ENCODE measurements at regions of chr13 and their contacts with region 1.

Region 1: DNA sequence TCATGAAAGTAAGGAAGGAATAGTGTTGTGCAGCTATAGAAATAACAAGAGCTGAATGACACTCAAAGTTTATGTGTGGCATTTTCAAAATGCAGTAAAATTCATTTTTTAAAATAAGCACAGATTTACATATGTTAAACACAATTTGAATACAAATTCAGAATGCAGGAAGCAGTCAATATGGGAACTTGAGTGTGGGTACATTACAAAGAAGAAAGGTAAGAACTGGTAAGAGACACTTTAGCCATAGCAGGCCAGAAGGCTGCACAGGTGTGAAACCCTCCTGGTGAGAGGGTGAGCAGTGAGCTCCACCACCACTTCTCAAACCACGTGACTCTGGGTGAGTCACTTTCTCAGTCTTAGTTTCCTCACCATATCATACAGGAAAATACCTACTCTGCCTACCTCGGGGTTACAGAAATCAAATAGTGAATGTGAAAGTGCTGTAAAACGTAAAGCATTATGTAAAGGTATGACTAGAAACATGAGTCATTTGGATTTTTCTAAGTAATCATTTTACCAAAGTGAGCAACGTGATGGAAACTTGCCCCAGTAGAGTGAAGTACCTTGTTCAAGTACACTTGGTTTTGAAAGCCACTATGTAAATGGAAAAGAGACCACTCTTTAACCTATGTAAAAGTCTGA is 40.5 kb downstream of the USP12 start:
- DNase-seq: peak; percentile 86
- H3K4me3 Mint-ChIP-seq: peak overlapping the region; percentile 61
- H3K27ac Mint-ChIP-seq: peak overlapping the region; percentile 92
- H3K4me1 Mint-ChIP-seq: peaks cover 90% of the 10 kb centered on the region
- H3K27me3 Mint-ChIP-seq: no peaks in the 10 kb centered on the region

Region 2: DNA sequence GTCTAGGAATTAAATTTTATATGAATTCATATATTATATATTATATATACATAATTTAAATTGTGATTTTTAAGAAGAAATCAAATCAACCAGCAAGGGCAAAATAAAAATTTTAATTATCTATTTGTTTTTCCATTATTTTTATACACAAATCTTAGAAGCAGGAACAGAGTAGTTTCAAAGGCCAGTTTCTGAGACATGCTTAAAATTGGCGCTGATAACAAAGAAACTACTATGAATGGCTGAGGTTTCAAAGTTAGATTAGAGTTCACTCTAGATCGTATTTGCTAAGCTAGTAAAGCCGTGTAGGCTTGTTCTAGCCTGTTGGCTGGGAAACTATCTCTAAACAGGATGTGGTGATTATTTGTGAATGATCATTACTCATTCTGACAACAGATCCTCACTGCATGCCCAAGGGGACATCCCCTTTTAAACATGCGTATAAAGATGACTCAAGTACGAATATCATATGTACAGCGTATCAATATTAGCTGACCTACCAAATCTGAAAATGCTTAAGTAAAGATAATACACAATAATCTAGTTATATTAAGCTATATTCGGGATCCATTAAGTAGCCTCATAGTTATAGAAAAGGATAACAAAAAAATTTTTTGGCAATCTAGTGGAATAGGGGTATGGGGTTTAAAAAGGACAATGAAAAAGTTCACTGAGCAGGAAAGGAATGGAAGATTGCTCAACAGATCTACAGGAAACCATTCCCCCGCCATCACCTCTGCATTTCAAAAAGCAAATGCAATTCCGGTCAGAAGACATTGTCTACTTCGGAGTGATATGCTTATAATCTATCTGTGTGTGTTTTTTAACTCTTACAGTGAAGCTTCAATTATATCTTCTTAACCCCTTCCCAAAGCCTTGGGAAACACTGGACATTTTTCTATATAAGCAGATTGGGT is 1229.4 kb before region 1 on chr13:
- CTCF ChIA-PET with region 1: no interaction called
- POLR2A ChIA-PET with region 1: no interaction called
- intact Hi-C with region 1: loop called (anchors 5 kb)
- DNase-seq: peak; percentile 44
- H3K4me3 Mint-ChIP-seq: peak overlapping the region; percentile 6
- H3K27ac Mint-ChIP-seq: no peak overlapping the region
- H3K4me1 Mint-ChIP-seq: peaks cover 26% of the 10 kb centered on the region
- H3K27me3 Mint-ChIP-seq: peaks cover 9% of the 10 kb centered on the region

Region 3: DNA sequence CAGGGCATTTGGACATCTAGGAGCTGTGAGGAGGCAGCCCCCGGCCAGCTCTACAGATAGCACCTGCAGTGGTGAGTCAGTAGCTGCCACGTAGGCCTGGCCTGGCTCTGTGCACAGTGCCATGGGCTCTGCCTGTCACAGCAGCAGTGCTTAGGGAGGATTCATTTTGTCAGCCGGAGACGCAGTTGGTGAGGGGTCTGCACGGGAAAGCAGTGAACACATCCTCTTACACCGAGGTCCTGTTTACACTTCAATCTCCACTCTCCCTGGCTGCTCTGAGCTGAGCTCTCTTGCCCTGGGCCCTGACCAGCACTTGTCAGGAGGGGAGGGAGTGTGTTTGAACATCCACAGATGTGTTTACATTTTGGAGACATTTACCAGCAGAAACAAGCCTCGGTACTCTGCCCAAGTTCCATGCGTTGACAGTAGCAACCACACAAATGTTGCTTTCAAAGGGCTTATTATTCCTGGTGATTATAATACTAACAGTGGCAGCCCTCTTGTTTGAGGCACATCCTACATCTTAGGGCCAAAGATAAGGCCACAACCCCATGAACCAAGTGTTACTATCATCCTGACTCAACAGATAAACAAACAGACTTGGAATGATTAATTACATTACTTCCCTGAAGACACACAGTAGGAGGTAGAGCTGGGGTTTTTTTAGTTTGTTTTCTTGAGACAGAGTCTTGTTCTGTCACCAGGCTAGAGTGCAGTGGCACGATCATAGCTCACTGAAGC is 108.4 kb before region 1 on chr13:
- CTCF ChIA-PET with region 1: no interaction called
- POLR2A ChIA-PET with region 1: no interaction called
- intact Hi-C with region 1: loop called (anchors 5 kb)
- DNase-seq: peak; percentile 18
- H3K4me3 Mint-ChIP-seq: no peak overlapping the region
- H3K27ac Mint-ChIP-seq: peak overlapping the region; percentile 25
- H3K4me1 Mint-ChIP-seq: peaks cover 8% of the 10 kb centered on the region
- H3K27me3 Mint-ChIP-seq: peaks cover 18% of the 10 kb centered on the region

Region 4: DNA sequence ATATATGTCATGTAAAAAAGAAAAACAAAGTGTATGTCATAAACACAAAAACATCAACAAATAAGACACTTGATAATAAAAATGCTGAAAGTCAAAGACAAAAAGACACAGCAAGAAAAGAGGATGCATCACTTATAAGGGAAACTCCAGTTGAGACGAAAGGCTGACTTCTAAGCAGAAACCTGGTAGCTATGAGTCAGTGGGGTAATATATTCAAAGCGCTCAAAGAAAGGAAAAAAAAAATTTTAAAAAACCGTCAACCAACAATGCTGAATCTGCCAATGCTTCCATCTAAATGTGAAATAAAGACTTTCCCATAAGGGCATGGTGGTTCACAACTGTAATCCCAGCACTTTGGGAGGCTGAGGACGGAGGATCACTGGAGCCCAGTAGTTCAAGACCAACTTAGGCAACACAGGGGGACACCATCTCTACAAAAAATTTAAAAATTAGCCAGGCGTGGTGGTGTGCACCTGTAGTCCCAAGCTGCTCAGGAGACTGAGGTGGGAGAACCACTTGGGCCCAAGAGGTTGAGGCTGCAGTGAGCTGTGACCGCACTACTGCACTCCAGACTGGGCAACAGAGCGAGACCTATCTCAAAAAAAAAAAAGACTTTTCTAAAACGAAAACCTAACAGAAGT is 16.5 kb after region 1 on chr13:
- CTCF ChIA-PET with region 1: interaction called, 5 read pairs
- POLR2A ChIA-PET with region 1: interaction called, 9 read pairs
- intact Hi-C with region 1: loop called (anchors 1 kb)
- DNase-seq: no peak
- H3K4me3 Mint-ChIP-seq: peak overlapping the region; percentile 45
- H3K27ac Mint-ChIP-seq: peak overlapping the region; percentile 91
- H3K4me1 Mint-ChIP-seq: peaks cover 76% of the 10 kb centered on the region
- H3K27me3 Mint-ChIP-seq: no peaks in the 10 kb centered on the region

Region 5: GRCh38 chr13:27182844-27183497 is 51.9 kb after region 1 on chr13:
- CTCF ChIA-PET with region 1: no interaction called
- POLR2A ChIA-PET with region 1: no interaction called
- intact Hi-C with region 1: no loop called
- DNase-seq: no peak
- H3K4me3 Mint-ChIP-seq: no peak overlapping the region
- H3K27ac Mint-ChIP-seq: no peak overlapping the region
- H3K4me1 Mint-ChIP-seq: no peaks in the 10 kb centered on the region
- H3K27me3 Mint-ChIP-seq: peaks cover 3% of the 10 kb centered on the region

Region 6: GRCh38 chr13:27194895-27195764 is 64.0 kb after region 1 on chr13:
- CTCF ChIA-PET with region 1: no interaction called
- POLR2A ChIA-PET with region 1: no interaction called
- intact Hi-C with region 1: loop called (anchors 1 kb)
- DNase-seq: peak; percentile 22
- H3K4me3 Mint-ChIP-seq: no peak overlapping the region
- H3K27ac Mint-ChIP-seq: no peak overlapping the region
- H3K4me1 Mint-ChIP-seq: peaks cover 19% of the 10 kb centered on the region
- H3K27me3 Mint-ChIP-seq: peaks cover 22% of the 10 kb centered on the region

Region 7: DNA sequence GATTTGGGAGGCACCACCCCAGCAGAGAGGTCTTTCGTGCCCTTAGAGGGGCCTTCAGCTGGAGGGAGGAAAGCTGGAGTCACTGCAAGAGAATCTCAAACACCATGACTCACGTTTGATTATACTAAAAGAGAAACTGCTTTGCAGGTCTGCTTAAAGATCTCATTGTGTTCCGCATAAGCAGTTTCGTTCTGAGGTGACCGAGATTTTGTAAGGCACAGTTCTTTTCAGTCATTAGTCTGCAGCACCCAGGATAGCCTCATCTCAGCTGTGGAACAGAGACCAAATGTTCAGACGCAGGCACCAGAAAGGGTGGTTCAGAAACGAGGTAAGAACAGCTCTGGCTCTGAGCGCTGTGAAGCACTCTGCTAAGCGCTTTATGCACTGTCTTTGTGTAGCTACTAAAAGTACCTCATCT is 222.1 kb after region 1 on chr13:
- CTCF ChIA-PET with region 1: no interaction called
- POLR2A ChIA-PET with region 1: interaction called, 4 read pairs
- intact Hi-C with region 1: loop called (anchors 1 kb)
- DNase-seq: peak; percentile 79
- H3K4me3 Mint-ChIP-seq: peak overlapping the region; percentile 45
- H3K27ac Mint-ChIP-seq: peak overlapping the region; percentile 82
- H3K4me1 Mint-ChIP-seq: peaks cover 19% of the 10 kb centered on the region
- H3K27me3 Mint-ChIP-seq: peaks cover 12% of the 10 kb centered on the region

Region 8: DNA sequence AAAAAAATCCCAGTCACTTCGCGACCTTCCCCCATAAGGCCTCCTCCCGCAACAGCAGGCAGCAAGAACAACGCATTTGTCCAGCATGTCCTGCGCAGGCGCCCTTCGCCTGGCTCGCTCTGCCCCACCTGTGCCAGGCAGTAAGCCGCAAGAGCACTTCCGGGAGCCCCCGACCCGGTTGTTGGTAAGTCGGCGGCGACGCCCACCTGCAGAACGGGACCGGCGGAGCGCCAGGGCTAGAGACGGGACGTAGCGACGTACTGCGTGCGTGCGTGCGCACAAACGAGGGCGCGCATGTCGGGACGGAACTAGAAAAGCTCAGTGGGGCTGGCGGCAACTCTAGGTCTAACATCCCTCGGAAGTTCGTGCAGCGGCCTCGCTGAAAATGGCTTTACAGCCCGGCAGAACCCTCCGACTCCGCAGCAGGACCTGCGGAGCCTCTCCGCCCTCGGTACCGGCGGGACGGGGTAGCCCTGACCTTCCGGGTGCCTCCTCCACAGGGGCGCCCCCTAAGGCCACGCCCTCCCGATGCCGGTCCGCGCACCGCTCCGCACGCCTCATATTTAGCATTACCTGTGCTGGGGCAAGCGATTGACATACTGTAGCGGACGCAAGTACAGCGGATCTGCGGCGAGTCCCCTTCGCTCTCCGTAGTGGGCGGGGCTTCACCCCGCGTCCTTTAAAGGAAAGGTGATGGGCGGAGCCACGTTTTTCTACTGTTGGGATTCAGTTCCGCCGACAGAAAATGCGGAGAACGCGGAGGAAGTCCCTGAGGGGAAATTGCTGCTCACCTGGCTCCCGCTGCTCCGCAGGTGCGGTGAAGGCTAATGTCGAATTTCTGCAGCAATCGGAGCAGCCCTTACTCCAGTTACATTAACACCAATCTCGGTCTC is 319.1 kb after region 1 on chr13 and contains the start of gene MTIF3:
- CTCF ChIA-PET with region 1: no interaction called
- POLR2A ChIA-PET with region 1: no interaction called
- intact Hi-C with region 1: loop called (anchors 1 kb)
- DNase-seq: peak; percentile 97
- H3K4me3 Mint-ChIP-seq: peak within 1 kb of the TSS; percentile 90
- H3K27ac Mint-ChIP-seq: peak within 1 kb of the TSS; percentile 95
- H3K4me1 Mint-ChIP-seq: peaks cover 57% of the 10 kb centered on the region
- H3K27me3 Mint-ChIP-seq: no peaks in the 10 kb centered on the region
- total RNA-seq, gene MTIF3: 35.7 to 37.3 TPM

Measured in activated CD4-positive, alpha-beta memory T cell treated with anti-CD3 and anti-CD28 coated beads for 36 hours (primary cell).